MCF 10A (cell line): ENCODE measurements at regions of chr3 and their contacts with region 1.

Region 1: DNA sequence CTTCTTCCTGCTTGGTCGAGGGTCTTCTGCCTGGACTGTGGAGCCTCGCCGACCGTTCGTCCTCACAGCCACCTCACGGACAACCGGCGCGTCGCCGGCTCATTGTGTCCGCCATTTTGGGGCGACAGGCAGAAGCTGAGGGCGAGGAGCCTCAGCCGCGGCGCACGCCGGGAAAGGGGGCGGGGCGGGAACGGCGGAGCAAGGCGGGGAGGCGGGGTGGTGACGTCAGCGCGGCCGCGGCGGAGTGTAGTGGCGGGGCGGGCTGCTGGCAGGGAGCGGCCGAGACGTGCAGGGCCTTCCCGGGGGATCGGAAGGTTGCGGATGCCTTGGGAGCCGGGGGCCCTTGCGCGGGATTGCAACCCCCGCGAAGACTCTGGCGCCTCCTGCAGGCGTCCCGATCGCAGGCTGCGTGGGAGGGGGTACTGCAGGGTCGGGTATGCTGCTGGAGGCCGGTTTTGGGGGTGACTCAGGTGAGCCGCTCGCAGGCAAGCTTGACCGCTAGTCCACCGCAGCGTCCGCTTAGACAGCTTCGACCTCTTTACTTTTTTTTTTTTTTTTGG is at the start of gene WDR82:
- DNase-seq: peak; percentile 90
- H3K4me3 Mint-ChIP-seq: peak within 1 kb of the TSS; percentile 84
- H3K27ac Mint-ChIP-seq: peak within 1 kb of the TSS; percentile 99
- H3K4me1 Mint-ChIP-seq: peaks cover 26% of the 10 kb centered on the region
- H3K27me3 Mint-ChIP-seq: no peaks in the 10 kb centered on the region
- CTCF ChIP-seq: peak; percentile 38
- total RNA-seq, gene WDR82: 60.7 and 62.5 TPM in 2 replicates

Region 2: GRCh38 chr3:52238761-52239701 is 39.6 kb before region 1 on chr3 and contains the start of gene TWF2:
- CTCF ChIA-PET with region 1: interaction called, 14 read pairs
- POLR2A ChIA-PET with region 1: interaction called, 120 read pairs
- intact Hi-C with region 1: loop called (anchors 1 kb)
- DNase-seq: peak; percentile 70
- H3K4me3 Mint-ChIP-seq: peak within 1 kb of the TSS; percentile 86
- H3K27ac Mint-ChIP-seq: peak within 1 kb of the TSS; percentile 87
- H3K4me1 Mint-ChIP-seq: peaks cover 31% of the 10 kb centered on the region
- H3K27me3 Mint-ChIP-seq: no peaks in the 10 kb centered on the region
- CTCF ChIP-seq: no peak
- total RNA-seq, gene TWF2: 30.5 and 47.0 TPM in 2 replicates

Region 3: GRCh38 chr3:52248816-52249547 is 29.6 kb before region 1 on chr3:
- CTCF ChIA-PET with region 1: interaction called, 3 read pairs
- POLR2A ChIA-PET with region 1: interaction called, 14 read pairs
- intact Hi-C with region 1: no loop called
- DNase-seq: peak; percentile 54
- H3K4me3 Mint-ChIP-seq: no peak overlapping the region
- H3K27ac Mint-ChIP-seq: no peak overlapping the region
- H3K4me1 Mint-ChIP-seq: peaks cover 10% of the 10 kb centered on the region
- H3K27me3 Mint-ChIP-seq: no peaks in the 10 kb centered on the region
- CTCF ChIP-seq: no peak

Region 4: DNA sequence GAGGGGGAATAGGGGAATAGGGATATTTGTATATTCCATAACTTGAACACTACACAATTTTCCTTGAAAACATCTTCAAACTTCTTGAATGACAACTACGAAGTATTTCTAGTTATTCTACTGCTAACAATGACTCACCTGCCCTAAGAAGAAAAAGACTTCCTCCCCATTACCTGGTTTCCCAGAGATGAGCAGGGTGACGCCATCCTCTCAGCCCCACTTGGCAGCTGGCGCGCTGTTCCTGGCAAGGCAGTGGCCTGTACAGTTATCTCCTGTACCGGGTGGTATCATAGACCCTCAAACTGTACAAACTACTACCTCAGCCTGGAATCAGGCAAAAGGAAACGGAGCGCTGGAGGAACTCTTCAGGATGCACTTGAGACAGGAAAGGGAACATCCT is 10.6 kb before region 1 on chr3:
- CTCF ChIA-PET with region 1: interaction called, 3 read pairs
- POLR2A ChIA-PET with region 1: interaction called, 14 read pairs
- intact Hi-C with region 1: no loop called
- DNase-seq: peak; percentile 53
- H3K4me3 Mint-ChIP-seq: no peak overlapping the region
- H3K27ac Mint-ChIP-seq: no peak overlapping the region
- H3K4me1 Mint-ChIP-seq: peaks cover 23% of the 10 kb centered on the region
- H3K27me3 Mint-ChIP-seq: no peaks in the 10 kb centered on the region
- CTCF ChIP-seq: no peak

Region 5: GRCh38 chr3:52752045-52752660 is 473.6 kb after region 1 on chr3:
- CTCF ChIA-PET with region 1: no interaction called
- POLR2A ChIA-PET with region 1: no interaction called
- intact Hi-C with region 1: no loop called
- DNase-seq: no peak
- H3K4me3 Mint-ChIP-seq: no peak overlapping the region
- H3K27ac Mint-ChIP-seq: no peak overlapping the region
- H3K4me1 Mint-ChIP-seq: no peaks in the 10 kb centered on the region
- H3K27me3 Mint-ChIP-seq: no peaks in the 10 kb centered on the region
- CTCF ChIP-seq: no peak